Psoas muscle (tissue), 8 donors: ENCODE measurements at regions of chr10 and their contacts with region 1.

Region 1: DNA sequence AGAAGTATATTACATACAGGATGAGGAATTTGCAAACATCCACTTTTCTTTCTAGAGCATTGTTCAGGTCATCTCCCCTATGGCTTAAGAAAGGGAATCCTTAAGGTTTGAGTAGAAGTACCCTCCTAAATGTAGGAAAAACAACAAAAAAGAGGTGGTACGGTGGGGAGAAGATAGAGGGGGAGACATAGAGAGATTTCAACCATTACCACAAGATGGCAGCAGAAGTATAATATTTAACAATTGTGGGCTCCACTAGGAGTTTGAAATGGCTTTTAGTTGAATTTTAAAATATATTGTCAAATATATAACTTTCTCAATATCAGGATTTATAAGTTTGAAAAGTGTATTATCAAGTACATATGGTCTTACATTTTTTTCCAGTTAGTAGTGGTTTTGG is 72.7 kb upstream of the PRKG1 start:
- DNase-seq: no peak
- ATAC-seq: peak in 3 of 4 donors; percentile 49 to 84 (median 71)
- H3K4me3 ChIP-seq: no peak overlapping the region
- H3K27ac ChIP-seq: no peak overlapping the region
- H3K4me1 ChIP-seq: peaks cover 71% of the 10 kb centered on the region
- H3K27me3 ChIP-seq: no peaks in the 10 kb centered on the region
- CTCF ChIP-seq: peak; percentile 65

Region 2: GRCh38 chr10:51047857-51048256 is 46.3 kb after region 1 on chr10:
- intact Hi-C with region 1: loop called in 1 of 2 experiments (anchors 5 kb)
- DNase-seq: no peak
- ATAC-seq: peak; percentile 48 to 74 (median 64)
- H3K4me3 ChIP-seq: no peak overlapping the region
- H3K27ac ChIP-seq: peak overlapping the region; percentile 21
- H3K4me1 ChIP-seq: peaks cover 50% of the 10 kb centered on the region
- H3K27me3 ChIP-seq: no peaks in the 10 kb centered on the region
- CTCF ChIP-seq: peak; percentile 25